Endothelial cell of umbilical vein (primary cell): ENCODE measurements at regions of chr1 and their contacts with region 1.

Region 1: DNA sequence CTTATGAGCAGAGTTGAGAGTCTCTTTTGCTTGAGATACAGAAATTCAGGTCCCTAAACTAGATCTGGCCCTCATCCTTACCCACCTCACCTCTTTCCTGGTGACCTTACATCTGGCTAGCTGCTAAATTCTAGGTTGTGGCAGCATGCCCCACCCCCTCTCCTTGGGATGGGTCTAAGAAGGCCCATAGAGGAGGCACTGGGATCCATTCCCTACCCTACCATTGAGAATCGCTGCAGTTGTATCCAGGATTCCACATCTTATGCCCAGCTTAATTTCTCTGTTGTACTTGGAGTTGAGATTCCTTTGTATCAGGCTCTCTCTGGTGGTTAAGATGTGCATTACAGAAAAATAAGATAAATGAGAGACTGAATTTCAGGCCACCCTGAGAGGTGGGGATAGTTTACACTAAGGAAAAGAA is 9.5 kb upstream of the TMEM39B start:
- DNase-seq: peak; percentile 78
- H3K4me3 ChIP-seq: no peak overlapping the region
- H3K27ac ChIP-seq: peak overlapping the region; percentile 35
- H3K4me1 ChIP-seq: peaks cover 22% of the 10 kb centered on the region
- H3K27me3 ChIP-seq: no peaks in the 10 kb centered on the region
- CTCF ChIP-seq: peak; percentile 34
- POLR2A ChIP-seq: no peak

Region 2: GRCh38 chr1:30274976-30275621 is 1788.2 kb before region 1 on chr1:
- CTCF ChIA-PET with region 1: no interaction called
- POLR2A ChIA-PET with region 1: no interaction called
- dilution Hi-C with region 1: no loop called
- intact Hi-C with region 1: no loop called
- DNase-seq: no peak
- H3K4me3 ChIP-seq: no peak overlapping the region
- H3K27ac ChIP-seq: no peak overlapping the region
- H3K4me1 ChIP-seq: no peaks in the 10 kb centered on the region
- H3K27me3 ChIP-seq: no peaks in the 10 kb centered on the region
- CTCF ChIP-seq: no peak
- POLR2A ChIP-seq: no peak

Region 3: GRCh38 chr1:31587720-31588394 is 475.4 kb before region 1 on chr1:
- CTCF ChIA-PET with region 1: no interaction called
- POLR2A ChIA-PET with region 1: no interaction called
- dilution Hi-C with region 1: no loop called
- intact Hi-C with region 1: loop called (anchors 5 kb)
- DNase-seq: peak; percentile 86
- H3K4me3 ChIP-seq: no peak overlapping the region
- H3K27ac ChIP-seq: peak overlapping the region; percentile 92
- H3K4me1 ChIP-seq: peaks cover 39% of the 10 kb centered on the region
- H3K27me3 ChIP-seq: no peaks in the 10 kb centered on the region
- CTCF ChIP-seq: peak; percentile 71 to 92
- POLR2A ChIP-seq: peak; percentile 81

Region 4: GRCh38 chr1:31872658-31873636 is 190.3 kb before region 1 on chr1:
- CTCF ChIA-PET with region 1: no interaction called
- POLR2A ChIA-PET with region 1: no interaction called
- dilution Hi-C with region 1: no loop called
- intact Hi-C with region 1: no loop called
- DNase-seq: no peak
- H3K4me3 ChIP-seq: no peak overlapping the region
- H3K27ac ChIP-seq: no peak overlapping the region
- H3K4me1 ChIP-seq: no peaks in the 10 kb centered on the region
- H3K27me3 ChIP-seq: peaks cover 0 to 2% of the 10 kb centered on the region in 2 experiments
- CTCF ChIP-seq: no peak
- POLR2A ChIP-seq: no peak

Region 5: GRCh38 chr1:31977385-31978131 is 85.7 kb before region 1 on chr1:
- CTCF ChIA-PET with region 1: interaction called, 22 read pairs
- POLR2A ChIA-PET with region 1: no interaction called
- dilution Hi-C with region 1: no loop called
- intact Hi-C with region 1: loop called (anchors 1 kb)
- DNase-seq: peak; percentile 44
- H3K4me3 ChIP-seq: no peak overlapping the region
- H3K27ac ChIP-seq: no peak overlapping the region
- H3K4me1 ChIP-seq: peaks cover 4% of the 10 kb centered on the region
- H3K27me3 ChIP-seq: no peaks in the 10 kb centered on the region
- CTCF ChIP-seq: peak; percentile 14 to 48
- POLR2A ChIP-seq: no peak

Region 6: GRCh38 chr1:32031578-32032274 is 31.5 kb before region 1 on chr1:
- CTCF ChIA-PET with region 1: interaction called, 7 read pairs
- POLR2A ChIA-PET with region 1: no interaction called
- dilution Hi-C with region 1: no loop called
- intact Hi-C with region 1: loop called (anchors 5 kb)
- DNase-seq: peak; percentile 49
- H3K4me3 ChIP-seq: no peak overlapping the region
- H3K27ac ChIP-seq: peak overlapping the region; percentile 31
- H3K4me1 ChIP-seq: peaks cover 16% of the 10 kb centered on the region
- H3K27me3 ChIP-seq: no peaks in the 10 kb centered on the region
- CTCF ChIP-seq: no peak
- POLR2A ChIP-seq: no peak

Region 7: DNA sequence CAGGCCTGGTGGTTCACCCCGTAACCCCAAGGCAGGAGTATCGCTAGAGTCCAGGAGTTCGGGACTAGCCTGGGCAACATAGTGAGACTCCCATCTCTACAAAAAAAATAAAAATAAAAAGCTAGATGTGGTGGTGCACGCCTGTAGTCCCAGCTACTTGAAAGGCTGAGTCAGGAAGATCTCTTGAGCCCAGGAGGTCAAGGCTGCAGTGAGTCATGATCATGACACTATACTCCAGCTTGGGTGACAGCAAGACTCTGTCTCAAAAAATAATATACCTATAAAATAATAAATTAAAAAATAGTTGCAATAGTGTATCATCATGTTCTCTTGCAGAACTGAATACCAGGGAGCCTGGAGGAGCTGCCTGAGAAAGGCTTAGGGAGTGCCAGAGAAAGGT is 10.4 kb before region 1 on chr1:
- CTCF ChIA-PET with region 1: interaction called, 33 read pairs
- POLR2A ChIA-PET with region 1: interaction called, 3 read pairs
- dilution Hi-C with region 1: no loop called
- intact Hi-C with region 1: no loop called
- DNase-seq: no peak
- H3K4me3 ChIP-seq: no peak overlapping the region
- H3K27ac ChIP-seq: no peak overlapping the region
- H3K4me1 ChIP-seq: no peaks in the 10 kb centered on the region
- H3K27me3 ChIP-seq: no peaks in the 10 kb centered on the region
- CTCF ChIP-seq: no peak
- POLR2A ChIP-seq: no peak

Region 8: DNA sequence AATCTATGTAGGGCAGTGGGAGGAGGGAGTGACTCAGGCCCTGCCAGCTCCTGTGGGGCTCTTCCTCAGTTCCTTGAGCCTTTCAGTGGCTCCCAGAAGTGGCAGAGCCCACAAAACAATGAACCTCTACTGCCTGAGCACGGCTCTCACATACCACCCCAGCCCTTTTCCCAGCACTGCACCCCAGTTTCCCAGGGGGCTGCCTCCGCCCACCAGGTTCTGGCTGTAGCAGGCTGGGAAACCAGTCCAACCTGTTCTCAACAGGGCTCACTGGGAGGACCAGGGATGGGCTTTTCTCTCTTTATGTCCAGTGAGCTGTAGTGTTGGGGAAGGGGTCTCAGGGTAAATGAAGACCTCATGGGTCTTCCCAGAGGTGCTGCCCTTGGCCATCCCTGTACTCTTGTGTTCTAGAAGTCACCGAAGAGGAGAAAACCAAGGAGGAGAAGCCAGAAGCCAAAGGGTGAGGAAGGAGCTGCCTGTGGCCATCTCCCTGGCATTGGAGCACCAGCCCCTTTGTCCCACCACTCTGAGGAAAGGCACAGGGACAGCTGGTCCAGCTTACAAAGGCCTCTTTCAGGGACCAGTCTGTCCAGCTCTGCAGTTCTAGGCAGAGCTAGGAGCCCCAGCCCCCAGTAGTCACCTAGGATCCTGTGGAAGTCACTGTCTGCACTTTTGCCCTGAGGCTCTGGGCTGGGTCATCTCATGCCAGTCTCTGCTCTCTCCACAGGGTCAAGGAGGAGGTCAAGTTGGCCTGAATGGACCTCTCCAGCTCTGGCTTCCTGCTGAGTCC is 269.2 kb after region 1 on chr1:
- CTCF ChIA-PET with region 1: no interaction called
- POLR2A ChIA-PET with region 1: no interaction called
- dilution Hi-C with region 1: no loop called
- intact Hi-C with region 1: no loop called
- DNase-seq: no peak
- H3K4me3 ChIP-seq: no peak overlapping the region
- H3K27ac ChIP-seq: no peak overlapping the region
- H3K4me1 ChIP-seq: peaks cover 14% of the 10 kb centered on the region
- H3K27me3 ChIP-seq: no peaks in the 10 kb centered on the region
- CTCF ChIP-seq: no peak
- POLR2A ChIP-seq: no peak

Region 9: DNA sequence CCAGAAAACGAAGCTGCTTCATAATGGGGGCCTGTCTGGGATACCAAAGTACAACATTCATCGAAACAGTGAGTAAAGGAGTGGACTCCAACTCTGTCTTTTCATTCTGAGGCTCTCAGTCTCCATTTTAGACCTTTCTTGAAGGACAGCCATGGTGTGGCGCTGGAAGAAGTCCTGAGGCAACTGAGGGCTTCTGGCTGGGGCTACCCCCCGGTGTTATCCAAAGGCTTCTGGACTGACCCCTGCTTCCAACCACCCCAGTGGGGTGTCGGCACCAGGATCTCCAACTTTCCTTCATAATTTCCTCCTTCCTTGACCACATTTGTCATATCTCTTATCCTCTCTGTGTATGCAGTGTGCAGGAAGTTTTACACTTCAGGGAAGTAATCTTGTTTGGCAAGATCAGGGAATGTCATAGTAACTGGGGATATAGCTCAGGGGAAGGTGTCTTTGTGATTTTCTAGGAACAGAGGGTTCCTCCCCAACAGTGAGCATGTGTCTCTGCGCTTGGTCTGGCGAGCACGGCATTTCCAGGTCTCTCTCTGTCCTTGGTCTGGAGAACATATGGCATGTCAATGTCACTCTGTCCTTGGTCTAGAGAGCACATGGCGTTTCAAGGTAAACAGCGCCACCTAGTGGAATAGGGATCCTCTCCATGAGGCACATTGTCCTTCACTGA is 350.4 kb after region 1 on chr1:
- CTCF ChIA-PET with region 1: interaction called, 4 read pairs
- POLR2A ChIA-PET with region 1: no interaction called
- dilution Hi-C with region 1: no loop called
- intact Hi-C with region 1: loop called (anchors 5 kb)
- DNase-seq: peak; percentile 63
- H3K4me3 ChIP-seq: no peak overlapping the region
- H3K27ac ChIP-seq: no peak overlapping the region
- H3K4me1 ChIP-seq: no peaks in the 10 kb centered on the region
- H3K27me3 ChIP-seq: peaks cover 9 to 10% of the 10 kb centered on the region in 2 experiments
- CTCF ChIP-seq: peak; percentile 72 to 83
- POLR2A ChIP-seq: no peak

Region 10: DNA sequence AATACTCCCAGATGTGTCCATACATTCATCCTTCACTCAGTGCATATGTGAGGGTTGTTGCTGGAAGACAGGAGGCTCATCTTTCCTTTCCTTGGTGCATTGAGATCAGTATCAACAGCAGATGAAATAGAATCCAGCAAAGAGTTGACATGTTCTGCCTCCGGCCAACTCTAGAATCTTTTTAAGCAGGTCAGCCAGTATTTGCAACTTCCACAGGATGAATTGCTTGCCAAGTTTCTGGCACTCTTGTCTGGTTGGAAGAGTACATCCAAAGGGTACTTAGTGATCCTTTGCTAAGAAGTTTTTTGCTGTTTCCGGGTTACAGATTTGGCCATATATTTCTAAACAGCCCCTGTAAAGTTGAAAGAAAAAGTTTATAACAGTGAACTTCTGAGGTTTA is 618.2 kb after region 1 on chr1:
- CTCF ChIA-PET with region 1: no interaction called
- POLR2A ChIA-PET with region 1: no interaction called
- dilution Hi-C with region 1: no loop called
- intact Hi-C with region 1: no loop called
- DNase-seq: no peak
- H3K4me3 ChIP-seq: no peak overlapping the region
- H3K27ac ChIP-seq: no peak overlapping the region
- H3K4me1 ChIP-seq: peaks cover 3% of the 10 kb centered on the region
- H3K27me3 ChIP-seq: no peaks in the 10 kb centered on the region
- CTCF ChIP-seq: no peak
- POLR2A ChIP-seq: no peak